ENCODE measurements at regions of chr1 and their contacts with region 1.

Region 1: GRCh38 chr1:153805042-153805745 is 30.0 kb downstream of the SLC27A3 start:
- DNase-seq: peak; percentile 38

Region 2: DNA sequence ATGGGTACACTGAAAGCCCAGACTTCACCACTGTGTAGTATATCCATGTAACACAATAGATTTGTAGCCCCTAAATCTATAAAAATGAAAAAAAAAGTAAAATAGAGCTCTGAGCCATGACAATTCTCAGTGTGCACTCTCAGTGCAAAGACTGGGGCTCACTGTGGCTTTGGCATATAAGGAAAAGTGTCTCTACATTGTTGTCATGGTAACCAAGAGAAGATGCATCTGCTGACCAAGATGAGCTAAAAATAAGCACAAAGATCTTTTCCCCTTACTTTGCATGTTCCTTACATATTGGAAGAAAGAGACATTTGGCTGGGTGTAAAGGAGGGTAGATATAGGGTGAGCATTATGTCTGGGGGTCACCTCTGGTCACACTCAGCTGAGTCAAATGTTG is 468.5 kb before region 1 on chr1:
- in situ Hi-C with region 1: no loop called
- DNase-seq: no peak

Region 3: GRCh38 chr1:153922972-153923925 is 118.1 kb after region 1 on chr1 and contains the start of gene GATAD2B:
- in situ Hi-C with region 1: loop called (anchors 25 kb)
- DNase-seq: peak; percentile 100
- total RNA-seq, gene GATAD2B: 8.4 and 8.7 TPM in 2 replicates

Region 4: GRCh38 chr1:153990468-153991150 is 185.4 kb after region 1 on chr1 and contains the start of gene RPS27:
- in situ Hi-C with region 1: loop called (anchors 25 kb)
- DNase-seq: peak; percentile 100
- total RNA-seq, gene RPS27: 5,494 and 5,700 TPM in 2 replicates

Measured in SK-MEL-5 (cell line).